ENCODE measurements at regions of chr12 and their contacts with region 1.

Region 1: DNA sequence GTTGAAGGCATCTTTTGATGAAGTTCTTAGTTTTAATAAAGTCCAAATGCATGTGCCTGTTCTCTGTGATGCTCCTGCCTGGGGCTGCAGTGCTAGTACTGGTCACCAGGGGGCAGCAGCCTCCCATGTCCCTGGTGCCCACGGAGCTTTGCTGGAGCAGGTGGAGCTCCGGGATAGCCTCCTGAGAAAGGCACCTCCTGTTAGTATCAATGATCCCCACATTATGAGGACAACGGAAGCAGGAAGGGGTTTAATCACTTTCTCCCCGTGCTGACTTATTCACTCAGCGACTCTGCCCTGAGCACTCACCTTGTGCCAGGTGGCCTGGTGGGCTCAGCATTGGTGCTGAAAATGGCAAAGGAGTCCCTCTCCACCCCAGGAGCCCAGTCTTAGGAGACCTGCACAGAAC is 123.0 kb upstream of the PZP start:
- DNase-seq: no peak
- H3K4me3 ChIP-seq: no peak overlapping the region
- H3K27ac ChIP-seq: no peak overlapping the region
- H3K4me1 ChIP-seq: peaks cover 0 to 6% (median 2%) of the 10 kb centered on the region in 4 donors
- H3K27me3 ChIP-seq: no peaks in the 10 kb centered on the region
- CTCF ChIP-seq: peak; percentile 90 to 94 (median 92)
- EP300 ChIP-seq: no peak
- POLR2A ChIP-seq: no peak

Region 2: GRCh38 chr12:9464408-9464807 is 133.2 kb after region 1 on chr12:
- intact Hi-C with region 1: loop called (anchors 2 kb)
- DNase-seq: no peak
- H3K4me3 ChIP-seq: no peak overlapping the region
- H3K27ac ChIP-seq: no peak overlapping the region
- H3K4me1 ChIP-seq: peaks cover 0 to 8% (median 0%) of the 10 kb centered on the region in 4 donors
- H3K27me3 ChIP-seq: no peaks in the 10 kb centered on the region
- CTCF ChIP-seq: no peak
- EP300 ChIP-seq: no peak
- POLR2A ChIP-seq: no peak

Region 3: DNA sequence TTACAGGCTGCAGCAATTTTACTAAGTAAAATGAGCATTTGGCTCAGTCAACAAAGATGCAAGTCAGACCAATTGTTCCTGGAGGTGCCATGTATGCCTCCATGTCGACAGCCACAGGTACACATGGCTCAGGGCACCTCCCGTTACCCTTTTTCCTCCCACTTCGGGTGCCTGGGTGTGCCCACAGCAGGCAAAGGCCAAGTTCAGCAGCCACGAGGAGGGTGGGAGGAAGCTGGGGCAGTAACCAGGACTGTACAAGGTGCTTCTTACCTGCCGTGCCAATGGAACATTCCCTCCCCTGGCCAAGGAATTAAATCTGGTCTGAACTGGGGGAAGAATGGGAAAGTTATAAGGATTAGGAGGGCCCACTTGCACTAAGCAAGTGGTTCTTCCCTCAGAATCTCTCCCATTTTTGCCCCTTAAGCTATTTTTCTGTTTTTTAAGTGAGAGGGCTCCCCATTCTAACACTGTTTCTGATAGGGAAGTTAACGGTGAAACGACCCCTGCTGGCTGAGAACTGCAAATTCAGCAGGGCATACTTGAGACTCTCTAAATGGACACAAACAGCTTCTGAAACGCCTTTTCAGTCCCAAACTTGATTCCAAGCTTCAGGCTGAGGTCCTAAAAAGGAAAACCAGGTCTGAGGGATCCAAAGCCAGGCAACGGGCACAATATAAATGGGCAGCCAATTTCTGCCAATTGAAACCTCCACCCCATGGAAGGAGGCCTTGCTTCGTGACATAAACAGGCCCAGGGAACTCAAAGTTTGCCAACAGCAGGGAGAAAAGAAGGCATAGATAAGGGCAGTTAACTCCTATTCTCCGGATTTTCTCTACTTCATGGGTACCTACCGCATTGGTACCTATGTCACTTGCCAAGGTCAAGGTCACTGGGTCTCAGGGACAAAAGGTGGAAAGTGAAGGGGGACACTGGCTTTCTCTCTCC is 376.9 kb after region 1 on chr12:
- intact Hi-C with region 1: loop called (anchors 5 kb)
- DNase-seq: no peak
- H3K4me3 ChIP-seq: no peak overlapping the region
- H3K27ac ChIP-seq: no peak overlapping the region
- H3K4me1 ChIP-seq: peaks cover 0 to 7% (median 0%) of the 10 kb centered on the region in 4 donors
- H3K27me3 ChIP-seq: peaks cover 0 to 3% (median 0%) of the 10 kb centered on the region in 4 donors
- CTCF ChIP-seq: peak; percentile 62 to 82 (median 71)
- EP300 ChIP-seq: no peak
- POLR2A ChIP-seq: no peak

Region 4: DNA sequence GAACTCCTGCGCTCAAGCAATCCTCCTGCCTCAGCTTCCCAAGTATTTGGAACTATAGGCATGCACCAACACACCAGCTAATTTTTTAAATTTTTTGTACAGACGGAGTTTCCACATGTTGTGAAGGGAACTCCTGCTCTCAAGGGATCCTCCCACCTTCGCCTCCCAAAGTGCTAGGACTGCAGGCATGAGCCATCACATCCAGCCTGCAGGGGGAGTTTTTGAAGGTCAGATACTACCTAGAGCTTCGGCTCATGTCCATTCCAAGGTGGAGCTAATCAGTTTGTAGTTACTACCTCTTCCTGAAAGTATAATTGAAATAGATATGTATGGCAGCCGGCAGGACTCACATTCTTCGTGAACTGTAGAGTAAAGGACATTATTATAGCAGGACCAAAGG is 1694.9 kb after region 1 on chr12:
- intact Hi-C with region 1: no loop called
- DNase-seq: no peak
- H3K4me3 ChIP-seq: no peak overlapping the region
- H3K27ac ChIP-seq: no peak overlapping the region
- H3K4me1 ChIP-seq: peaks cover 0 to 5% (median 0%) of the 10 kb centered on the region in 4 donors
- H3K27me3 ChIP-seq: no peaks in the 10 kb centered on the region
- CTCF ChIP-seq: no peak
- EP300 ChIP-seq: no peak
- POLR2A ChIP-seq: no peak

Measured in esophagus muscularis mucosa (tissue), 4 donors.